ENCODE measurements at regions of chr18 and their contacts with region 1.

Region 1: DNA sequence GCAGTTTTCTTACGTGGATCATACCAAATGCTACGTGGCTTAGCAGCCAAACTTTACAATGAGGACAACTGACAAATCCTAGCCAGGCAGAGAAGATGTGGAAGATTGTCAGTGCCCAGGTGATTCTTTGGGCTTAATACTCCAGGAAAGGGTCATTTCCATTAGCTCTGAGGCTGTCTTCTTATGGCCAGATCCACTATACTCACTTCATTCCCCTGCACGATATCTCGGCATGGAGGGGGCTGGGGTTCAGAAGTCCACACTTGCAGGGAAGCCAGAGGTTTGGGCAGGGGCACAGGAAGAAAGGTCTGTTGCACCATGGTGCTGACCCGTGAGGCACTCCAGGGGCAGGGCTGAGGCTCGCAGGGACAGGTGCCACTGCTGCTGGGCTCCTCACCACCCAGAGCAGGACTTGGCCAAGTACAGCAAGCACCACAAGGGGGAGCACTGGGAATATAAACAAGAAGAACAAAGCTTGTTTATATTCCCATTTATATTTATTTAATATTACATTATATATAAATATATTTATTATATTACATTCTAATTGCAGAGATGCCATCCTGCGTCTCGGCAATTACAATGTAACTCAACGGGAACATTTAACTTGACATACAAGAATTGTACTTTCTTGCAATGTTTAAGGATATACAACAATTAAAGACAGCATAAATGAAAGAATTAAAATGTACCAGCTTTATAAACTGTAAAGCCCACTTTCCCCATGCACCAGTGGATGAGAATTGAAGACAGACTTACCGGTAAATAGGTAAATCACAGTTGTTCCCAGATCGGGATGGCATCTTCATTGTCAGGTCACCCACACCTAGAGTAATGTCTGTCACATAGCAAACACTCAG is 27.2 kb downstream of the CLUL1 start:
- DNase-seq: no peak
- ATAC-seq: peak; percentile 97
- H3K4me3 ChIP-seq: no peak overlapping the region
- H3K27ac ChIP-seq: no peak overlapping the region
- H3K4me1 ChIP-seq: no peaks in the 10 kb centered on the region
- H3K27me3 ChIP-seq: no peaks in the 10 kb centered on the region
- CTCF ChIP-seq: peak; percentile 51 to 73 (median 72)
- EP300 ChIP-seq: no peak
- POLR2A ChIP-seq: no peak
- RAD21 ChIP-seq: peak; percentile 84

Region 2: GRCh38 chr18:361939-362309 is 262.1 kb before region 1 on chr18:
- CTCF ChIA-PET with region 1: no interaction called
- POLR2A ChIA-PET with region 1: no interaction called
- RAD21 ChIA-PET with region 1: no interaction called
- SMC1A ChIA-PET with region 1: no interaction called
- in situ Hi-C with region 1: no loop called
- intact Hi-C with region 1: no loop called
- DNase-seq: no peak
- ATAC-seq: no peak
- H3K4me3 ChIP-seq: no peak overlapping the region
- H3K27ac ChIP-seq: no peak overlapping the region
- H3K4me1 ChIP-seq: no peaks in the 10 kb centered on the region
- H3K27me3 ChIP-seq: no peaks in the 10 kb centered on the region; a peak in 1 of 4 replicates
- CTCF ChIP-seq: no peak
- EP300 ChIP-seq: no peak
- POLR2A ChIP-seq: no peak
- RAD21 ChIP-seq: no peak

Region 3: GRCh38 chr18:658001-658946 is 34.3 kb after region 1 on chr18:
- CTCF ChIA-PET with region 1: interaction called, 17 read pairs
- POLR2A ChIA-PET with region 1: interaction called, 5 read pairs
- RAD21 ChIA-PET with region 1: interaction called, 13 read pairs
- SMC1A ChIA-PET with region 1: interaction called, 3 read pairs
- in situ Hi-C with region 1: no loop called
- intact Hi-C with region 1: no loop called
- DNase-seq: peak; percentile 57
- ATAC-seq: peak; percentile 82
- H3K4me3 ChIP-seq: peak overlapping the region; percentile 92
- H3K27ac ChIP-seq: peak overlapping the region; percentile 86
- H3K4me1 ChIP-seq: peaks cover 7% of the 10 kb centered on the region
- H3K27me3 ChIP-seq: no peaks in the 10 kb centered on the region
- CTCF ChIP-seq: no peak
- EP300 ChIP-seq: no peak
- POLR2A ChIP-seq: peak; percentile 80
- RAD21 ChIP-seq: no peak

Region 4: DNA sequence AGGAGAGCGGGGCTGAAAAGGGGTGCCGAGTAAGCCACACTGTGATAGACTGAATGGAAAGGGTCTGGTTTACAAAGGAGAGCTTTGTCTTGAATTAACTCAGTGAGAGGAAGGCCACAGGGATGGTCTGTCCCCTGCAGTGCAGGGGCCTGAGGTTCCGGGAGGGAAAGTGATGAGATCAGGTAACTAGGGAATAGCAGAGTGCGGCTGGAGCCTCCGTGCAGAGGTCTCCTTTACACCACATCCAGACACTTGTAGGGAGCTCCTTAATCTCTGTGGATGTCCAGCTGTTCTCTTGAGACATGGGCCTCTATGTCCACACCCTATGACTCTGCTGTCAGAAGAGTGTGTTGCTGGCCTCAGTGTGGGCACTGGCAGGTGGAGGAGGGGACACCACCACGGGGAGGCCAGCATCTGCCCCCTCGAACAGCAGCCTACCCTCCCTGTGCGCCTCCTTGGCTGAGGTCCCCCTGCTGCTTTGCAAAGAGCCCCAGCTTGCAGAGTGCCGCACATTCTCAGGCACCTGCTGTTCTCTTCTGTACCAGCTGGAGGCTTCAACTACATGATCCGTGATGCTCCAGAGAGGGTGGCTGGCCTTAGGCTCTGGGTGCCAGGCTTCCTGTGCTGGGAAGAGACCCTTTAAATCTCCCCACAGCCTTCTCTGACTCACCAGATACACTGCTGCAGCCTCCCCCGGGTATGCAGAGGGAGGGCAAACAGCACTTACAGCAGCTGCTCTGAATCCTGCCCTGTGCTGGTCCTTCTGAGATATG is 62.5 kb after region 1 on chr18:
- CTCF ChIA-PET with region 1: interaction called, 13 read pairs
- POLR2A ChIA-PET with region 1: no interaction called
- RAD21 ChIA-PET with region 1: interaction called, 4 read pairs
- SMC1A ChIA-PET with region 1: no interaction called
- in situ Hi-C with region 1: no loop called
- intact Hi-C with region 1: no loop called
- DNase-seq: no peak
- ATAC-seq: peak; percentile 53
- H3K4me3 ChIP-seq: no peak overlapping the region
- H3K27ac ChIP-seq: no peak overlapping the region
- H3K4me1 ChIP-seq: no peaks in the 10 kb centered on the region
- H3K27me3 ChIP-seq: no peaks in the 10 kb centered on the region
- CTCF ChIP-seq: no peak
- EP300 ChIP-seq: no peak
- POLR2A ChIP-seq: peak; percentile 34
- RAD21 ChIP-seq: no peak

Region 5: GRCh38 chr18:712401-713134 is 88.6 kb after region 1 on chr18 and contains the start of gene ENOSF1:
- CTCF ChIA-PET with region 1: interaction called, 9 read pairs
- POLR2A ChIA-PET with region 1: no interaction called
- RAD21 ChIA-PET with region 1: interaction called, 5 read pairs
- SMC1A ChIA-PET with region 1: interaction called, 13 read pairs
- in situ Hi-C with region 1: no loop called
- intact Hi-C with region 1: loop called (anchors 10 kb)
- DNase-seq: no peak
- ATAC-seq: no peak
- H3K4me3 ChIP-seq: peak within 1 kb of the TSS; percentile 69
- H3K27ac ChIP-seq: peak within 1 kb of the TSS; percentile 51
- H3K4me1 ChIP-seq: no peaks in the 10 kb centered on the region; the same call in 1 of the 2 replicates
- H3K27me3 ChIP-seq: no peaks in the 10 kb centered on the region
- CTCF ChIP-seq: peak in 2 of 3 experiments; percentile 37 to 62; a peak in 4 of 6 replicates
- EP300 ChIP-seq: no peak
- POLR2A ChIP-seq: peak; percentile 81
- RAD21 ChIP-seq: peak; percentile 46; the same call in 1 of the 2 replicates
- polyA plus RNA-seq, gene ENOSF1: 12.5 to 13.3 TPM

Region 6: GRCh38 chr18:839224-840022 is 215.4 kb after region 1 on chr18:
- CTCF ChIA-PET with region 1: interaction called, 251 read pairs
- POLR2A ChIA-PET with region 1: no interaction called
- RAD21 ChIA-PET with region 1: interaction called, 168 read pairs
- SMC1A ChIA-PET with region 1: interaction called, 188 read pairs
- in situ Hi-C with region 1: loop called (anchors 5 kb)
- intact Hi-C with region 1: loop called (anchors 1 kb)
- DNase-seq: peak; percentile 25
- ATAC-seq: peak; percentile 100
- H3K4me3 ChIP-seq: no peak overlapping the region
- H3K27ac ChIP-seq: no peak overlapping the region
- H3K4me1 ChIP-seq: no peaks in the 10 kb centered on the region
- H3K27me3 ChIP-seq: no peaks in the 10 kb centered on the region
- CTCF ChIP-seq: peak; percentile 93 to 96 (median 96); a peak in 5 of 6 replicates
- EP300 ChIP-seq: no peak
- POLR2A ChIP-seq: no peak
- RAD21 ChIP-seq: peak; percentile 68

Measured in GM12878 (cell line).